ENCODE measurements at regions of chr19 and their contacts with region 1.

Region 1: GRCh38 chr19:56121180-56122167 is at the start of gene ZNF787:
- DNase-seq: peak; percentile 95 to 97 (median 95)
- H3K4me3 ChIP-seq: peak within 1 kb of the TSS; percentile 60 to 80 (median 64)
- H3K4me3 Mint-ChIP-seq: peak within 1 kb of the TSS; percentile 84 to 92
- H3K27ac ChIP-seq: peak within 1 kb of the TSS; percentile 95 to 96
- H3K27ac Mint-ChIP-seq: peak within 1 kb of the TSS; percentile 94 to 98 (median 97)
- H3K4me1 ChIP-seq: peaks cover 31 to 45% of the 10 kb centered on the region in 2 donors
- H3K4me1 Mint-ChIP-seq: peaks cover 38% of the 10 kb centered on the region
- H3K27me3 ChIP-seq: no peaks in the 10 kb centered on the region
- H3K27me3 Mint-ChIP-seq: peaks cover 0 to 2% (median 0%) of the 10 kb centered on the region in 3 donors
- CTCF ChIP-seq: no peak
- polyA plus RNA-seq, gene ZNF787: 1.2 to 16.2 (median 1.8) TPM

Region 2: GRCh38 chr19:55830656-55831055 is 290.8 kb before region 1 on chr19:
- intact Hi-C with region 1: no loop called
- DNase-seq: no peak
- H3K4me3 ChIP-seq: no peak overlapping the region
- H3K4me3 Mint-ChIP-seq: no peak overlapping the region
- H3K27ac ChIP-seq: no peak overlapping the region
- H3K27ac Mint-ChIP-seq: no peak overlapping the region
- H3K4me1 ChIP-seq: no peaks in the 10 kb centered on the region
- H3K4me1 Mint-ChIP-seq: no peaks in the 10 kb centered on the region
- H3K27me3 ChIP-seq: no peaks in the 10 kb centered on the region
- H3K27me3 Mint-ChIP-seq: peaks cover 0 to 2% (median 0%) of the 10 kb centered on the region in 3 donors
- CTCF ChIP-seq: no peak

Region 3: DNA sequence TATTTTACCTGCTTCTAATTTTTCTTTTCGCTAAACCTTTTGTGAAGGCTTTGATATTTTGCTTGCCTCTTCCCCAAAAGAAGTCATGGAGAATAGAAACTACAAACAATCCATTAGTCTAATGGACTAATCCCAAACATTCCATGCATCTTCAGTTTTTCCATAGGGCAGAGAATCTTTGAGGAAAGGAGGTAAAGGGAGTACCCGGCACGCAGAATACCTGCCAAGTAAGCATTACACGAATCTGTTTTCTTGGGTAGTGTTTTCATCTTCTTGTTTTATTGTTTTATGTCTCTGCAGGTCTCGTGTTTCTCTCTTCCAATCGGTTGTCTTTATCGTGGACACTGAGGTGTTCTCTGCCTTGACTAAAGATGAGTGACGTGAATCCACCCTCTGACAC is 173.9 kb before region 1 on chr19 and contains the start of gene NLRP8:
- intact Hi-C with region 1: no loop called
- DNase-seq: no peak
- H3K4me3 ChIP-seq: no peak within 1 kb of the TSS
- H3K4me3 Mint-ChIP-seq: no peak within 1 kb of the TSS
- H3K27ac ChIP-seq: no peak within 1 kb of the TSS
- H3K27ac Mint-ChIP-seq: no peak within 1 kb of the TSS
- H3K4me1 ChIP-seq: no peaks in the 10 kb centered on the region
- H3K4me1 Mint-ChIP-seq: no peaks in the 10 kb centered on the region
- H3K27me3 ChIP-seq: no peaks in the 10 kb centered on the region
- H3K27me3 Mint-ChIP-seq: no peaks in the 10 kb centered on the region
- CTCF ChIP-seq: no peak
- polyA plus RNA-seq, gene NLRP8: not detected

Region 4: DNA sequence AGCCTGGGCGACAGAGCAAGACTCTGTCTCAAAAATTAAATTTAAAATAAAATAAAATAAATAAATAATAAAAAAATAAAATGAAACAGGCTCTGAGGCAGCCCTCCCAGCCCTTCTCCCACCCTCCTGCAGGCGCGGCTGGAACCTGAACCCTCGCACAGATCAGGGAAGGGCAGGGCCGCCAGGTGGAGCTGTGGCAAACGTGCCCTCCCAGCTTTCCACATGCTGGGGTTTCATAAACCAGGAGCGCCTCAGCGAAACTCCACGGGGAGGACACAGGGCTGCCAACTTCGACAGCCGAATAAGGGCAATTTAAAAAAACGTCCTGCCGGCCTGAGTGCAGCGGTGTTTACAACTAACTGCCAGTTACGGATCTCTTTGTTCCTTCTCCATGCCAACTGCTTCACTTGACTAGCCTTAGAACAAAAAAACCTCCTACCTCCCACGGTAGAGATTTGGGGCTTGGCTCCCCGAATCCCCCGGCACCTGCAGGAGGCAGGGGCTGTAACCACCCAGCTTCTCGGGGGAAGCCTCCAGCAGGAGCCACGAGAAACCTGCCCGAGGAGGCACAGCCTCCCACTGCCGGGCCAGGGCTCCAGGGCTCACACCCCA is 16.3 kb before region 1 on chr19:
- intact Hi-C with region 1: no loop called
- DNase-seq: peak; percentile 59 to 74 (median 62)
- H3K4me3 ChIP-seq: no peak overlapping the region
- H3K4me3 Mint-ChIP-seq: peak overlapping the region in 1 of 2 donors; percentile 24
- H3K27ac ChIP-seq: peak overlapping the region; percentile 37 to 66
- H3K27ac Mint-ChIP-seq: peak overlapping the region in 6 of 7 donors; percentile 13 to 81 (median 57)
- H3K4me1 ChIP-seq: peaks cover 24 to 44% of the 10 kb centered on the region in 2 donors
- H3K4me1 Mint-ChIP-seq: peaks cover 46% of the 10 kb centered on the region
- H3K27me3 ChIP-seq: no peaks in the 10 kb centered on the region
- H3K27me3 Mint-ChIP-seq: peaks cover 0 to 3% (median 2%) of the 10 kb centered on the region in 3 donors
- CTCF ChIP-seq: peak; percentile 85

Region 5: GRCh38 chr19:56140583-56141416 is 19.3 kb after region 1 on chr19 and contains the start of gene ZNF444:
- intact Hi-C with region 1: loop called (anchors 1 to 2 kb)
- DNase-seq: peak; percentile 99
- H3K4me3 ChIP-seq: peak within 1 kb of the TSS; percentile 43 to 94 (median 79)
- H3K4me3 Mint-ChIP-seq: peak within 1 kb of the TSS; percentile 85 to 91
- H3K27ac ChIP-seq: peak within 1 kb of the TSS; percentile 81 to 84
- H3K27ac Mint-ChIP-seq: peak within 1 kb of the TSS; percentile 89 to 95 (median 93)
- H3K4me1 ChIP-seq: peaks cover 39% of the 10 kb centered on the region in 2 donors
- H3K4me1 Mint-ChIP-seq: peaks cover 52% of the 10 kb centered on the region
- H3K27me3 ChIP-seq: no peaks in the 10 kb centered on the region
- H3K27me3 Mint-ChIP-seq: no peaks in the 10 kb centered on the region
- CTCF ChIP-seq: no peak
- polyA plus RNA-seq, gene ZNF444: 2.7 to 6.9 (median 3.5) TPM

Region 6: DNA sequence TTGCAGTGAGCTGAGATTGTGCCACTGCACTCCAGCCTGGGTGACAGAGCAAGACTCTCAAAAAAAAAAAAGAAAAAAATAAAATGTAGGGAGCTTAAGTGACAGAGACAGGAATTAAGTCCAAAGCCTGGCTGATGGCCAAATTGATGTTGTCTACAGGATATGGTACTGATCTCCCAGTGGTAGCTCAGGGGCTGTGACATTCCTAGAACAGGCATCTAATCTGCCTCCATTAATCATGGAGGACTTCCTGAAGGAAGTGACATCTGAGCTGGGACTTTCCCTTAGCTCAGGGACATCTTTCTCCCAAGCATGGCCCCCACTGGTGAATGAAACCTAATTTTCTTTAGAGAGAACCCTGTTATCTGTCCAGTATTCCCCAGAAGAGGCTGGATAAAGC is 139.7 kb after region 1 on chr19:
- intact Hi-C with region 1: no loop called
- DNase-seq: peak in 1 of 3 donors; percentile 52
- H3K4me3 ChIP-seq: no peak overlapping the region
- H3K4me3 Mint-ChIP-seq: no peak overlapping the region
- H3K27ac ChIP-seq: no peak overlapping the region
- H3K27ac Mint-ChIP-seq: peak overlapping the region in 3 of 7 donors; percentile 0 to 9 (median 3)
- H3K4me1 ChIP-seq: peaks cover 0 to 6% of the 10 kb centered on the region in 2 donors
- H3K4me1 Mint-ChIP-seq: peaks cover 25% of the 10 kb centered on the region
- H3K27me3 ChIP-seq: no peaks in the 10 kb centered on the region
- H3K27me3 Mint-ChIP-seq: no peaks in the 10 kb centered on the region
- CTCF ChIP-seq: no peak

Measured in CD14-positive monocyte (primary cell).